GM12878 (cell line): ENCODE measurements at regions of chr7 and their contacts with region 1.

Region 1: GRCh38 chr7:87564289-87564963 is 36.3 kb downstream of the ABCB1 start:
- DNase-seq: no peak
- ATAC-seq: peak; percentile 98
- H3K4me3 ChIP-seq: no peak overlapping the region
- H3K27ac ChIP-seq: no peak overlapping the region
- H3K4me1 ChIP-seq: no peaks in the 10 kb centered on the region
- H3K27me3 ChIP-seq: no peaks in the 10 kb centered on the region
- CTCF ChIP-seq: peak; percentile 52 to 74 (median 54)
- EP300 ChIP-seq: no peak
- POLR2A ChIP-seq: no peak
- RAD21 ChIP-seq: peak; percentile 55

Region 2: GRCh38 chr7:87543623-87544022 is 20.8 kb before region 1 on chr7:
- CTCF ChIA-PET with region 1: interaction called, 17 read pairs
- POLR2A ChIA-PET with region 1: interaction called, 3 read pairs
- RAD21 ChIA-PET with region 1: no interaction called
- SMC1A ChIA-PET with region 1: interaction called, 11 read pairs
- in situ Hi-C with region 1: no loop called
- intact Hi-C with region 1: no loop called
- DNase-seq: no peak
- ATAC-seq: peak; percentile 71
- H3K4me3 ChIP-seq: no peak overlapping the region
- H3K27ac ChIP-seq: no peak overlapping the region
- H3K4me1 ChIP-seq: no peaks in the 10 kb centered on the region
- H3K27me3 ChIP-seq: no peaks in the 10 kb centered on the region
- CTCF ChIP-seq: no peak
- EP300 ChIP-seq: no peak
- POLR2A ChIP-seq: no peak
- RAD21 ChIP-seq: no peak

Region 3: DNA sequence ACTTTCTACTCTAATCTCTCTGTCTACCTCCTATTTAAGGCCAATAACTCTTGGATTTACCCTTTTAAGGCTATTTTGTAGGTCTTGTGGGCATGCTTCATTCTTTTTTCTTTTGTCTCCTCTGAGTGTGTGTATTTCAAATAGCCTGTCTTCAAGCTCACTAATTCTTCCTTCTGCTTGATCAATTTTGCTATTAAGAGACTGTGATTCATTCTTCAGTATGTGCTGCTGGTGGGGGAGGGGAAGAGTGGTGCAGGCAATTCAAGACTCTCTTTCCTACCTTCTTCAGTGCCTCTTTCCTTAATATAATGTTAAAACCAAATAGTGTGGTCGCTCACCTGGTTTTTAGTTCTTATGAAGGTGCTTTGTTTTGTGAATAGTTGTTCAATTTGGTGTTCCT is 16.2 kb after region 1 on chr7:
- CTCF ChIA-PET with region 1: interaction called, 39 read pairs
- POLR2A ChIA-PET with region 1: no interaction called
- RAD21 ChIA-PET with region 1: no interaction called
- SMC1A ChIA-PET with region 1: interaction called, 10 read pairs
- in situ Hi-C with region 1: no loop called
- intact Hi-C with region 1: no loop called
- DNase-seq: no peak
- ATAC-seq: no peak
- H3K4me3 ChIP-seq: no peak overlapping the region
- H3K27ac ChIP-seq: no peak overlapping the region
- H3K4me1 ChIP-seq: no peaks in the 10 kb centered on the region
- H3K27me3 ChIP-seq: no peaks in the 10 kb centered on the region
- CTCF ChIP-seq: no peak
- EP300 ChIP-seq: no peak
- POLR2A ChIP-seq: no peak
- RAD21 ChIP-seq: no peak